ENCODE measurements at regions of chr10 and their contacts with region 1.

Region 1: DNA sequence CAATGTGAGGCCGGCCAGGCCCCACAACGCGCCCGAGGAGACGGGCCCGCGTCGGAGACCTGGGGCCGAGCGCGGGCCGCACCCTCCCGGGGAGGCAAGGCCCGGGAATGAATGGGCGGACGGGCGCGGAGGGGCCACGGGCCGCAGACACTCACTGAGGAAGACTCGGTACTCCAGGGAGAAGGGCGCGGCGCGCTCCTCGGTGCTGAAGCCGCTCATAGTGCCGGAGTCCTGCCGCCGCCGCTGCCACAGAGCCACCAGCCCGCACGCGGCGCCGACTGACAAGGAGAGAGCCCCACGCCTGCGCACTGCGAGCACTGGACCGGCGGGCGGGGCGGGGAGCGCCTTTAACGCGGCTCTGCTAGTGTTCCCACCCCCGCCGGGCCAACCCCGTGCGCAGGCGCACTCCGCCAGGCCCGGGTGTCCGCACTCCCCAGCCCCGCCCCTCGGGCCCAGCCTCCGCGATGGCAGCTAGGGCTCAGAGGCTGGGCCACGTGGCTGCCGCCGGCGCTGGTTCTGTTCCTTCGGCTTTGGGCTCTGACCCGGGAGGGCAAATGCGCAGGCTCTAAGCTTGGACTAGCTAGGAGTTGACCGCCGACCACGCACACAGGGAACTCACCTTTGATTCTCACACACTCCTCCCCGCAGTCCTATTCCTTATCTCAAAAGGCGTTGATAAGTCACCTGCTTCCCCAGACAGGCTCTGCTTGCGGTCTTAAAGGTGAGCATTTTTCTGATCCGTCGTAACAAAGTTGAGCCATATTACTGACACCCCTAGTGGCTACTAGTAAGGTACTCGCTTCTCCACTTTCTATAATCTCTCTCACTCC is at the start of gene PPA1:
- DNase-seq: peak; percentile 98
- H3K4me3 Mint-ChIP-seq: peak within 1 kb of the TSS; percentile 88
- H3K27ac Mint-ChIP-seq: peak within 1 kb of the TSS; percentile 85
- H3K4me1 Mint-ChIP-seq: peaks cover 30% of the 10 kb centered on the region
- H3K27me3 Mint-ChIP-seq: no peaks in the 10 kb centered on the region
- total RNA-seq, gene PPA1: 405 and 419 TPM in 2 replicates

Region 2: GRCh38 chr10:69895759-69896158 is 337.6 kb before region 1 on chr10:
- intact Hi-C with region 1: no loop called
- DNase-seq: no peak
- H3K4me3 Mint-ChIP-seq: no peak overlapping the region
- H3K27ac Mint-ChIP-seq: no peak overlapping the region
- H3K4me1 Mint-ChIP-seq: no peaks in the 10 kb centered on the region
- H3K27me3 Mint-ChIP-seq: no peaks in the 10 kb centered on the region

Region 3: GRCh38 chr10:70146489-70147258 is 86.7 kb before region 1 on chr10 and contains the start of gene TYSND1:
- intact Hi-C with region 1: loop called (anchors 2 kb)
- DNase-seq: peak; percentile 92
- H3K4me3 Mint-ChIP-seq: peak within 1 kb of the TSS; percentile 92
- H3K27ac Mint-ChIP-seq: peak within 1 kb of the TSS; percentile 97
- H3K4me1 Mint-ChIP-seq: peaks cover 16% of the 10 kb centered on the region
- H3K27me3 Mint-ChIP-seq: no peaks in the 10 kb centered on the region
- total RNA-seq, gene TYSND1: 12.5 and 13.6 TPM in 2 replicates

Region 4: GRCh38 chr10:70169649-70170364 is 63.5 kb before region 1 on chr10:
- intact Hi-C with region 1: loop called (anchors 2 kb)
- DNase-seq: no peak
- H3K4me3 Mint-ChIP-seq: peak overlapping the region; percentile 89
- H3K27ac Mint-ChIP-seq: peak overlapping the region; percentile 94
- H3K4me1 Mint-ChIP-seq: peaks cover 48% of the 10 kb centered on the region
- H3K27me3 Mint-ChIP-seq: no peaks in the 10 kb centered on the region

Region 5: GRCh38 chr10:70186090-70186489 is 47.2 kb before region 1 on chr10:
- intact Hi-C with region 1: no loop called
- DNase-seq: no peak
- H3K4me3 Mint-ChIP-seq: no peak overlapping the region
- H3K27ac Mint-ChIP-seq: no peak overlapping the region
- H3K4me1 Mint-ChIP-seq: no peaks in the 10 kb centered on the region
- H3K27me3 Mint-ChIP-seq: peaks cover 22% of the 10 kb centered on the region

Region 6: DNA sequence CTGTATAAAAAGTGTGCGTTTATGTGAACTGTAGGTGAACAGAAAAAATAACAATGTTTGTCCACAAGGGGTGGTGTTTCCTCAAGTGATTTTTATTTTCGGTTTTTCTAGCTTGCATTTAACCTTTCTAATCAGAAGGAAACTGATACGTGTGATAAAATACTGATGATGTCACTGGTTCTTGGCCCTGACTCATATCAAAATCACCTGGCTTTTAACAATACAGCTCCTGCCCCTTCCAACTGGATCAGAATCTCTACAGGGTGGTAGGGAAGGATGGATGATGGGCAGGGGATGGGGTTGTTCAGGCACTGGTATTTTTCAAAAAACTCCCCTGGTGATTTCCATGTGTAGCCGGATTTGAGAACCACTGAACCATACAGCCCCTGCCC is 39.6 kb after region 1 on chr10:
- intact Hi-C with region 1: loop called (anchors 1 kb)
- DNase-seq: no peak
- H3K4me3 Mint-ChIP-seq: no peak overlapping the region
- H3K27ac Mint-ChIP-seq: no peak overlapping the region
- H3K4me1 Mint-ChIP-seq: peaks cover 12% of the 10 kb centered on the region
- H3K27me3 Mint-ChIP-seq: no peaks in the 10 kb centered on the region

Region 7: DNA sequence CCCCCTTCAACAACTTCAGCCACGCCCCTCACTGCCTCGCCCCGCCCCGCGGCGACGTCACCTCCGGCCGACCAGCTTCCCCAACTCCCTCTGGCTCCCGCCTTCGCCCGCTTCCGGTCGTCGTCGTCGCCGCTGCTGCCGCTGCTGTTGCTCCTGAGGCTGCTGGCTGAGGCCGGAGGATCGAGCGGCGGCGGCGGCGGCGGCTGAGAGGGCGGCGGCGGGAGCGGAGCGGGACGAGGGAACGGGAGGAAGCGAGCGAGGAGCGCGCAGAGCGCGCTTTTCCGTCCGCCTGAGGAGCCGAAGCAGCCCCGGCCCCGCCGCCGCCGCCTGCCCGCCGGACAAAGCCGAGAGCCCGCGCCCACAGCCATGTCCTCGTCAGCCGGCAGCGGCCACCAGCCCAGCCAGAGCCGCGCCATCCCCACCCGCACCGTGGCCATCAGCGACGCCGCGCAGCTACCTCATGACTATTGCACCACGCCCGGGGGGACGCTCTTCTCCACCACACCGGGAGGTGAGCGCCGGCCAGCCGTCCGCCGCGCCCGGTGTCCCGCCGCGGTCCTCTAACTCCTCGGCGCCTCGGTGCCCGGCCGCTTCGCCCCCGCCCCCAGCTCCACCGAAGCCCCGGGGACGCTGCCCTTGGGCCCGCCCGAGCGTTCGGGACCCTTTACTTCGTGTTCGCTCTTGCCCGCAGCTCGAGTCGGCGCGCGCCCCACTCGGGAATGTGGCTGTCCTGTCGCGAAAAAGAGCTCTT is 170.9 kb after region 1 on chr10 and contains the start of gene EIF4EBP2:
- intact Hi-C with region 1: loop called (anchors 1 kb)
- DNase-seq: peak; percentile 98
- H3K4me3 Mint-ChIP-seq: peak within 1 kb of the TSS; percentile 91
- H3K27ac Mint-ChIP-seq: peak within 1 kb of the TSS; percentile 79
- H3K4me1 Mint-ChIP-seq: peaks cover 31% of the 10 kb centered on the region
- H3K27me3 Mint-ChIP-seq: no peaks in the 10 kb centered on the region
- total RNA-seq, gene EIF4EBP2: 39.5 and 40.0 TPM in 2 replicates

Region 8: GRCh38 chr10:71659111-71659634 is 1425.8 kb after region 1 on chr10:
- intact Hi-C with region 1: no loop called
- DNase-seq: no peak
- H3K4me3 Mint-ChIP-seq: no peak overlapping the region
- H3K27ac Mint-ChIP-seq: no peak overlapping the region
- H3K4me1 Mint-ChIP-seq: peaks cover 3% of the 10 kb centered on the region
- H3K27me3 Mint-ChIP-seq: no peaks in the 10 kb centered on the region